MCF 10A (cell line): ENCODE measurements at regions of chr19 and their contacts with region 1.

Region 1: GRCh38 chr19:42254989-42255765 is at the start of gene ERF:
- DNase-seq: peak; percentile 94
- H3K4me3 Mint-ChIP-seq: peak within 1 kb of the TSS; percentile 85
- H3K27ac Mint-ChIP-seq: peak within 1 kb of the TSS; percentile 35
- H3K4me1 Mint-ChIP-seq: peaks cover 22% of the 10 kb centered on the region
- H3K27me3 Mint-ChIP-seq: no peaks in the 10 kb centered on the region
- CTCF ChIP-seq: no peak
- total RNA-seq, gene ERF: 27.8 and 35.1 TPM in 2 replicates

Region 2: DNA sequence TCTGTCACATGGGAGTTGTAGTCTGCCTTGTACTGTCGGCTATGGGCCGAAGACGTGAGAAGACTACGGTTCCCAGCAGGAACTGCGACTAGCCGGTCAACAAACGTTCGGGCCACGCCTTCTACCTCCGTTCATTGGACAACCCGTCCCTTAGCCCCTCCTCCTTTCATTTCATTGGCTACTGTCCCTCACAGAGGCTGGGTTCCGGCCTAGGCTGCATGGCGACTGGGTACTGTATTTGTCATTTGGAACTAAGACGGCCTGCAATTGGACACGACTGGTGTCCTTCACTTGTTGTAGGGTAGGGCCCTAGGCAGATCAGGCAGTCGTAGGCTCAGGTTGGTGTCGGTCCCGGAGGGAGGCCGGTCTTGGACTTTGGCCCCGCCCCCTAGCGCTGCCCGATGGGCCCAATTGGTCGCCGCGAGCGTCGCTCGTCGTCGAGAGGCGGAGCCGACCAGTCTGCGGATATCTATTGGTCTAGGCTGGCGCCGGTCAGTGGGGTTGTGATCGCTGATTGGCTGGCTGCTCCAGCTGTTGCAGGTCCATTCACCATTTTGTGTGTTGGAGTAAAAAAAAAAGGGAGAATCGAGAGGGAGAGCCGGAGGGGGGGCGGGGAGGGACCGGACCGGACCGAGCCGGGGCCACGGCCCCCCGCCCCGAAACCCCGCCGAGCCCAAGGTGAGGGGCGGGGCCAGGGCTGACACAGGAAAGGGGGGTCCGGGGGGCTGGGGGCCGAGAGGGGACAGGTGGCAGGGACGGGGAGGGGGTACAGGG is 13.7 kb after region 1 on chr19 and contains the start of gene CIC:
- CTCF ChIA-PET with region 1: interaction called, 3 read pairs
- POLR2A ChIA-PET with region 1: interaction called, 22 read pairs
- intact Hi-C with region 1: loop called (anchors 2 kb)
- DNase-seq: peak; percentile 100
- H3K4me3 Mint-ChIP-seq: no peak within 1 kb of the TSS
- H3K27ac Mint-ChIP-seq: no peak within 1 kb of the TSS
- H3K4me1 Mint-ChIP-seq: peaks cover 23% of the 10 kb centered on the region
- H3K27me3 Mint-ChIP-seq: no peaks in the 10 kb centered on the region
- CTCF ChIP-seq: no peak
- total RNA-seq, gene CIC: 66.9 and 67.9 TPM in 2 replicates